Endothelial cell of umbilical vein (primary cell): ENCODE measurements at regions of chr6 and their contacts with region 1.

Region 1: GRCh38 chr6:2353412-2354137 is 108.2 kb upstream of the GMDS start:
- DNase-seq: peak; percentile 92
- H3K4me3 ChIP-seq: peak overlapping the region in 1 of 3 experiments; percentile 6
- H3K27ac ChIP-seq: no peak overlapping the region
- H3K4me1 ChIP-seq: peaks cover 6% of the 10 kb centered on the region
- H3K27me3 ChIP-seq: no peaks in the 10 kb centered on the region
- CTCF ChIP-seq: peak; percentile 64 to 66
- POLR2A ChIP-seq: no peak

Region 2: GRCh38 chr6:1596088-1596852 is 757.3 kb before region 1 on chr6:
- CTCF ChIA-PET with region 1: interaction called, 90 read pairs
- POLR2A ChIA-PET with region 1: no interaction called
- dilution Hi-C with region 1: no loop called
- intact Hi-C with region 1: loop called (anchors 1 kb)
- DNase-seq: peak; percentile 58
- H3K4me3 ChIP-seq: no peak overlapping the region
- H3K27ac ChIP-seq: no peak overlapping the region
- H3K4me1 ChIP-seq: no peaks in the 10 kb centered on the region
- H3K27me3 ChIP-seq: peaks cover 1 to 2% of the 10 kb centered on the region in 2 experiments
- CTCF ChIP-seq: peak; percentile 81 to 93
- POLR2A ChIP-seq: no peak

Region 3: GRCh38 chr6:1686117-1687098 is 667.2 kb before region 1 on chr6:
- CTCF ChIA-PET with region 1: interaction called, 11 read pairs
- POLR2A ChIA-PET with region 1: no interaction called
- dilution Hi-C with region 1: no loop called
- intact Hi-C with region 1: no loop called
- DNase-seq: peak; percentile 71
- H3K4me3 ChIP-seq: no peak overlapping the region
- H3K27ac ChIP-seq: no peak overlapping the region
- H3K4me1 ChIP-seq: peaks cover 13% of the 10 kb centered on the region
- H3K27me3 ChIP-seq: no peaks in the 10 kb centered on the region
- CTCF ChIP-seq: peak; percentile 12 to 26
- POLR2A ChIP-seq: no peak

Region 4: GRCh38 chr6:2021713-2022125 is 331.9 kb before region 1 on chr6:
- CTCF ChIA-PET with region 1: no interaction called
- POLR2A ChIA-PET with region 1: no interaction called
- dilution Hi-C with region 1: no loop called
- intact Hi-C with region 1: loop called (anchors 10 kb)
- DNase-seq: peak; percentile 48
- H3K4me3 ChIP-seq: no peak overlapping the region
- H3K27ac ChIP-seq: no peak overlapping the region
- H3K4me1 ChIP-seq: no peaks in the 10 kb centered on the region
- H3K27me3 ChIP-seq: no peaks in the 10 kb centered on the region
- CTCF ChIP-seq: no peak
- POLR2A ChIP-seq: no peak

Region 5: GRCh38 chr6:2196079-2196679 is 157.4 kb before region 1 on chr6:
- CTCF ChIA-PET with region 1: interaction called, 12 read pairs
- POLR2A ChIA-PET with region 1: no interaction called
- dilution Hi-C with region 1: no loop called
- intact Hi-C with region 1: loop called (anchors 1 kb)
- DNase-seq: peak; percentile 88
- H3K4me3 ChIP-seq: no peak overlapping the region
- H3K27ac ChIP-seq: no peak overlapping the region
- H3K4me1 ChIP-seq: peaks cover 11% of the 10 kb centered on the region
- H3K27me3 ChIP-seq: no peaks in the 10 kb centered on the region
- CTCF ChIP-seq: peak; percentile 50 to 53
- POLR2A ChIP-seq: no peak

Region 6: DNA sequence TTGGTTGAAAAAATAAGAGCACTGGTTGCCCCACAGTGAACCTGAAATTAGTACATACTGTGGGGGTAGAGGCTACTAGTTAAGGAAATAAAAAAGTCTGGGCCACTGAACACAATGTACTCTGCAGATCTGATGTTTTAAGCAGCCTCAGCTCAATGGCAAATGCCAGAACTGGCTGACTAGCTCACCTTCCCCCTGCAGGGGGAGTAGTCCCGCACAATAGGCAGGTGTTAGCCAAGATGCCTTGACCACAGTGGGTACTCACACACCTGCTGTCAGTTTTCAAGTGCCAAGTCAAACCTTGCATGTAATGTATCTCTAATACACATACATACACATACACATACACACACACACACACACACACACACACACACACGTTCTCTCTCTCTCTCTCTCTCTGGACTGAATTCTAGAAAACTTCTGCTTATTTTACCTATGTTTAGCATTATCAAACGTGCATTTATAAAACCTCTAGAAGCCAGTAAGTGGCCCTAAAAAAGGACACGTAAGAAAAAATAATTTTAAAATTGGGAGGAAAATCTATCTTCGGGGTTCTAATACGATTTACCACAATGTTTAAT is 144.3 kb before region 1 on chr6:
- CTCF ChIA-PET with region 1: interaction called, 79 read pairs
- POLR2A ChIA-PET with region 1: no interaction called
- dilution Hi-C with region 1: no loop called
- intact Hi-C with region 1: loop called (anchors 1 kb)
- DNase-seq: peak; percentile 64
- H3K4me3 ChIP-seq: no peak overlapping the region
- H3K27ac ChIP-seq: no peak overlapping the region
- H3K4me1 ChIP-seq: no peaks in the 10 kb centered on the region
- H3K27me3 ChIP-seq: no peaks in the 10 kb centered on the region
- CTCF ChIP-seq: peak; percentile 42 to 75
- POLR2A ChIP-seq: no peak

Region 7: GRCh38 chr6:2448820-2449571 is 95.4 kb after region 1 on chr6:
- CTCF ChIA-PET with region 1: interaction called, 17 read pairs
- POLR2A ChIA-PET with region 1: no interaction called
- dilution Hi-C with region 1: no loop called
- intact Hi-C with region 1: loop called (anchors 1 kb)
- DNase-seq: peak; percentile 86
- H3K4me3 ChIP-seq: peak overlapping the region in 2 of 3 experiments; percentile 4 to 64
- H3K27ac ChIP-seq: no peak overlapping the region
- H3K4me1 ChIP-seq: peaks cover 4% of the 10 kb centered on the region
- H3K27me3 ChIP-seq: peaks cover under 1 to 2% of the 10 kb centered on the region in 2 experiments
- CTCF ChIP-seq: peak; percentile 60 to 69
- POLR2A ChIP-seq: no peak